CD4-positive, alpha-beta T cell (primary cell): ENCODE measurements at regions of chr12 and their contacts with region 1.

Region 1: DNA sequence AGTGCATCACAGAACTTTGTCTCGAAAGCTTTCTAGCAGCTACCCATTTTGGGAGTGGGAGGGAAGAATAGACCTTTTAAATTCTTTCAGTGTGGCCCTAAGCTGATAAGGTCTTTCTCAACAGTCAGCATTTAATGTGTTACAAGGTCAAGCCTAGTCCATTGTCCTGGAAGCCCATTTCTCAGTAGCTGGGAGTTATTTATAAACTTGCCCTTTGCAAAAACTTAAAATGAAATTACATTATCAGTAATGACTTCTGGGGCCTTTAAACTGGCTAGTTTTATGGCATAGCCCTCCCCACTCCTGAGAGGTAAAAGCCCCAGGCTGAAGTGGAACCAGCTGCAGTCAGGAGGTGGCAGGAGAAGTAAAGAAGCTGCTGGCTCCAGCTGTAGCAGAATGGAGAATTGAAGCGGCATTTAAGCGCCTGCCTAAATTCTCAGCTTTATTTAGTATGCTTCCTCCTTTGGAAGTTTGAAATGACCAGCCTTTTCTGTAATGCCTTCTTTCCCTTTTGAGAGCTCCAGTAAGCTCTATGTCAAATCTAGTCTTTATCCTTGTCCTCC is 12.4 kb downstream of the COPZ1 start:
- DNase-seq: no peak
- ATAC-seq: no peak
- H3K4me3 ChIP-seq: no peak overlapping the region
- H3K4me3 Mint-ChIP-seq: no peak overlapping the region
- H3K27ac ChIP-seq: no peak overlapping the region
- H3K27ac Mint-ChIP-seq: no peak overlapping the region
- H3K4me1 ChIP-seq: peaks cover 16% of the 10 kb centered on the region
- H3K4me1 Mint-ChIP-seq: peaks cover 30% of the 10 kb centered on the region
- H3K27me3 ChIP-seq: no peaks in the 10 kb centered on the region
- H3K27me3 Mint-ChIP-seq: no peaks in the 10 kb centered on the region
- CTCF ChIP-seq: no peak

Region 2: GRCh38 chr12:54324617-54325441 is 12.5 kb before region 1 on chr12 and contains the start of gene COPZ1:
- CTCF ChIA-PET with region 1: interaction called, 13 read pairs
- POLR2A ChIA-PET with region 1: interaction called, 9 read pairs
- intact Hi-C with region 1: no loop called
- DNase-seq: peak; percentile 84 to 99 (median 90)
- ATAC-seq: peak; percentile 94
- H3K4me3 ChIP-seq: peak within 1 kb of the TSS; percentile 76
- H3K4me3 Mint-ChIP-seq: peak within 1 kb of the TSS; percentile 92
- H3K27ac ChIP-seq: peak within 1 kb of the TSS; percentile 67 to 78
- H3K27ac Mint-ChIP-seq: peak within 1 kb of the TSS; percentile 93
- H3K4me1 ChIP-seq: peaks cover 22% of the 10 kb centered on the region
- H3K4me1 Mint-ChIP-seq: peaks cover 36% of the 10 kb centered on the region
- H3K27me3 ChIP-seq: no peaks in the 10 kb centered on the region
- H3K27me3 Mint-ChIP-seq: no peaks in the 10 kb centered on the region
- CTCF ChIP-seq: peak; percentile 88
- total RNA-seq, gene COPZ1: 31.2 to 33.9 TPM

Region 3: GRCh38 chr12:54379401-54380201 is 42.2 kb after region 1 on chr12:
- CTCF ChIA-PET with region 1: interaction called, 11 read pairs
- POLR2A ChIA-PET with region 1: no interaction called
- intact Hi-C with region 1: loop called in 1 of 2 experiments (anchors 5 kb)
- DNase-seq: peak; percentile 82 to 93 (median 87)
- ATAC-seq: peak; percentile 99
- H3K4me3 ChIP-seq: peak overlapping the region; percentile 34
- H3K4me3 Mint-ChIP-seq: peak overlapping the region; percentile 2
- H3K27ac ChIP-seq: no peak overlapping the region
- H3K27ac Mint-ChIP-seq: no peak overlapping the region
- H3K4me1 ChIP-seq: peaks cover 7% of the 10 kb centered on the region
- H3K4me1 Mint-ChIP-seq: peaks cover 6% of the 10 kb centered on the region
- H3K27me3 ChIP-seq: no peaks in the 10 kb centered on the region
- H3K27me3 Mint-ChIP-seq: no peaks in the 10 kb centered on the region
- CTCF ChIP-seq: peak; percentile 100